Mammary epithelial cell (primary cell): ENCODE measurements at regions of chr22 and their contacts with region 1.

Region 1: DNA sequence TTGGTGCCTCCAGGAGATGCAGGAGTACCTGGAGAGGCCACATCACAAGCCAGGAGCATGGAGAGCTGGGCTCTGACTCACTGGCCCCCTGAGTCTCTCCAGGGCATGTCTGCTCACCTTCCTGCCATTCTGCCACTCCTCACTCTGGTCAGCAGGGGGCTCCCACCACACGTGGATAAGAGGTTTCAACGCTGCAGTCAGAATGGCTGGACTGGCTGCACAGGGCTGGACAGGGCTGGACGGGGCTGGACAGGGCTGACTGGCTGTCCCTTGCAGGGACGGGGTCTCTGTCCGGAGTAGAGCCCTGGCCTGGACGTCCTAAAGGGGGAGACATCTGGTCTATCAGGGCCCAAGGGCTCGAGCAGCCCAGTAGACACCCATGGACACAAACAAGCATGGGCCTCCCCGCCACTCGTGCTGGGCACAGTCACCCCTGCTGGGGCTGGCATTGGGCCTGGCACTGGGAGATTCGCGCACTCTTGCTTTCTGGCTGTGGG is 34.6 kb downstream of the CYTH4 start:
- DNase-seq: peak; percentile 87
- H3K4me3 ChIP-seq: no peak overlapping the region
- H3K27ac ChIP-seq: no peak overlapping the region
- H3K4me1 ChIP-seq: peaks cover 48% of the 10 kb centered on the region
- H3K27me3 ChIP-seq: no peaks in the 10 kb centered on the region
- CTCF ChIP-seq: peak; percentile 97 to 99

Region 2: DNA sequence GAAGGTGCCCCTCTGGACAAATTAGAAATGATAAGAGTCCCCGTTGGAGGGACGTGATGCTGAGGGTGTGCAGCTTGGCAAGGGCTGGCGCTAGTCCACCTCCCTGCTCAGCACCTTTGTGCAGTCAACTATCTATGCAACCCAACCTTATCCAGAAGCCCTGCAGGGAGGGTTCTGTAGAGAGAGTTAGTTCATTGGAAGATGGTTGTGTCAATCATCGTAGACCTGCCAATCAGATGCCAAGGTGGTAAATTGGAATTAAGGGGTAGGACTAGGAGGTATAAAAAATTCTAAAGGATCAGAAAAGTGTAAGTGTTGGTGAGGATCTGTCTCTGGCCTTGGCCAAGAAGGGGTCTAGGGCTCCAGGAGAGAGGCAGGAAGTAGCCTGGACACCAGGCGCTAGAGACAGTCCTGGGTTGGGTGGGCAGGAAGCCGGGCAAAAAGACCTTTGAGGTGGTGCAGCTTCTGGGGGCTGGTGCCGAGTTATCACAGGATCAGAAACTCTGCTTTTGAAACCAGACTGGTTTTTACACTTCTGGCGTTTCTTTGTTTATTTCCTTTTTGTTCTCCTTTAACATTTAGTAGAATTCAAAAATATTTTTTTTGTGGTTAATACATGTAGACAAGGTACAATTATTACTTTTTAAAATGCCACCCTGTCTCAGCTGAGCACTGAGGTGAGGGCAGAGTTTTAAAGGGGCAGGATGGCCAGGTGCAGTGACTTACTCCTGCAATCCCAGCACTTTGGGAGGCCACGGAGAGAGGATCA is 130.5 kb before region 1 on chr22:
- CTCF ChIA-PET with region 1: no interaction called
- dilution Hi-C with region 1: no loop called
- in situ Hi-C with region 1: no loop called
- intact Hi-C with region 1: no loop called
- DNase-seq: peak; percentile 68
- H3K4me3 ChIP-seq: no peak overlapping the region
- H3K27ac ChIP-seq: no peak overlapping the region
- H3K4me1 ChIP-seq: peaks cover 33% of the 10 kb centered on the region
- H3K27me3 ChIP-seq: no peaks in the 10 kb centered on the region
- CTCF ChIP-seq: no peak

Region 3: GRCh38 chr22:37267135-37267587 is 49.8 kb before region 1 on chr22:
- CTCF ChIA-PET with region 1: no interaction called
- dilution Hi-C with region 1: no loop called
- in situ Hi-C with region 1: no loop called
- intact Hi-C with region 1: loop called (anchors 1 kb)
- DNase-seq: no peak
- H3K4me3 ChIP-seq: peak overlapping the region; percentile 25 to 38 (median 31)
- H3K27ac ChIP-seq: no peak overlapping the region
- H3K4me1 ChIP-seq: peaks cover 2% of the 10 kb centered on the region
- H3K27me3 ChIP-seq: no peaks in the 10 kb centered on the region
- CTCF ChIP-seq: peak; percentile 70 to 87

Region 4: GRCh38 chr22:37428649-37429586 is 112.0 kb after region 1 on chr22:
- CTCF ChIA-PET with region 1: no interaction called
- dilution Hi-C with region 1: no loop called
- in situ Hi-C with region 1: no loop called
- intact Hi-C with region 1: loop called (anchors 1 kb)
- DNase-seq: no peak
- H3K4me3 ChIP-seq: no peak overlapping the region
- H3K27ac ChIP-seq: no peak overlapping the region
- H3K4me1 ChIP-seq: peaks cover 36% of the 10 kb centered on the region
- H3K27me3 ChIP-seq: no peaks in the 10 kb centered on the region
- CTCF ChIP-seq: peak; percentile 49 to 65

Region 5: DNA sequence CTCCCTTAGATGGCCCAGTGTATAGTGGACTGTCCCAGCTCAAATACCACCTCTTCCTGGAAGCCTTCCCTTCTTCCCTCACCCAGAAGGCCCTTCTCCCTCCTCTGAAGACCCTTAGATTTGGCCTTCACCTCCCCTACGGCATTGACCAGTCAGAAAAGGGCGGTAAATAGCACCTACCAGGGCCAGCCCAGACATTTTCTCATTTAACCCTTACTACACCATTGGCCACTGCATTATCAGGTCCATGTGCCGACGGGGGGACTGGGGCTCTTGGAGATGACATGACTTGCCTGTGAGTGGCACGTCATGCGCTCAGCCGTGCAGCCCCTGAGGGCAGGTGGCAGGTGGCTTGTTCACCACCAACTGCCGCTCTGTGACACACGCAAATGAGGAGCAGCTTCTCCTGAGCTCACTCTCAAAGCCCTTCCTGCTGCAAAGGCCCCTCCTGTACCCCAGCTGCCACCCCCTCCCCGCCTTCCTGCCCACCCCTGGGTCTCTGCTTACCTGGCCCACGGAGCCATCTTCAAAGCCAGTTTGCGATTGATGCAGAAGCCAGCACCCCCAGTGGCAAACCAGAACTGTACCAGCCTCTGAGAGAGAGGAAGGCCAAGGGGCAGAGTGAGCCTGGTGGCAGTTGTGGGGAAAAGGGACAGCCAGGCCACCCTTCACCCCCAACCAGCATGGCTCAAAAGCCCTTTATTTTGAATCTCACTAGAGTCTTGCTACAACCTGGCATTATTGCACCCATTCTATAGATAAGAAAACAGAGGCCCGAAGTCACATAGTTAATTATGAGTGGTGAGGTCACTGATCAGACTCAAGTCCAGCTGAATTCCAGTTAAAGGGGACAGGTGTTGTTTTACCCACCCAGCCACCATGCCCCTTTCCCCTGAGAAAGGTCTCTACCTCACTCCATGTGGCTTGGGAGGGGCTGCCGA is 159.7 kb after region 1 on chr22:
- CTCF ChIA-PET with region 1: no interaction called
- dilution Hi-C with region 1: no loop called
- in situ Hi-C with region 1: no loop called
- intact Hi-C with region 1: no loop called
- DNase-seq: no peak
- H3K4me3 ChIP-seq: no peak overlapping the region
- H3K27ac ChIP-seq: no peak overlapping the region
- H3K4me1 ChIP-seq: no peaks in the 10 kb centered on the region
- H3K27me3 ChIP-seq: no peaks in the 10 kb centered on the region
- CTCF ChIP-seq: no peak

Region 6: DNA sequence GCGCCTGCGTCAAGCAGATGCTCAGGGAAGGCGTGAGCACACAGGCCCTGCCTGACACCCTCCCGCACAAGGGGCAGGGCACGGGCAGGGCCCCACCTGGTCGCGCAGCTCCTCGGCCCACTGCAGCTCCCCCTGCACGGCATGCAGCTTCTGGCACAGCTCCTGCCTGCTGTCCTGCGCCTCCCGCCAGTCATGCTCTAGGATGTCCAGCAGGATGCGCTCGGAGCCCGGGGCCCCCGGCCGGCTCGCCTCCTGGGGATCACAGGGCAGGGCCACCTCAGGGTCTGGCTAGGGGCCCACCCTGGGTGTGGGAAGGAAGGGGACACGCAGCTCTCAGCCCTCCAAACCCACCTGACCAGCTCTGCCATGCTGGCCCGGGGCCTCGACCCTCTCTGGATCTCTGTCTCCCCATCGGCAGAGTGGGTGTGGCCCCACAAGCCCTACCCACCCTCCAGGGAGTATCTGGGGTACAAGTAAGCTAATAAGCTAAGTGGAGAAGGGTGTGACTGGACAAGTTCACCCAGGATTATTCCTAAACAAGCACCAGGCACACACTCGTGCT is 191.6 kb after region 1 on chr22:
- CTCF ChIA-PET with region 1: interaction called, 16 read pairs
- dilution Hi-C with region 1: no loop called
- in situ Hi-C with region 1: no loop called
- intact Hi-C with region 1: no loop called
- DNase-seq: no peak
- H3K4me3 ChIP-seq: no peak overlapping the region
- H3K27ac ChIP-seq: no peak overlapping the region
- H3K4me1 ChIP-seq: peaks cover 60% of the 10 kb centered on the region
- H3K27me3 ChIP-seq: no peaks in the 10 kb centered on the region
- CTCF ChIP-seq: no peak

Region 7: GRCh38 chr22:37594237-37594636 is 277.3 kb after region 1 on chr22:
- CTCF ChIA-PET with region 1: interaction called, 3 read pairs
- dilution Hi-C with region 1: no loop called
- in situ Hi-C with region 1: no loop called
- intact Hi-C with region 1: loop called (anchors 2 kb)
- DNase-seq: no peak
- H3K4me3 ChIP-seq: no peak overlapping the region
- H3K27ac ChIP-seq: no peak overlapping the region
- H3K4me1 ChIP-seq: no peaks in the 10 kb centered on the region
- H3K27me3 ChIP-seq: no peaks in the 10 kb centered on the region
- CTCF ChIP-seq: no peak